ENCODE measurements at regions of chr17 and their contacts with region 1.

Region 1: DNA sequence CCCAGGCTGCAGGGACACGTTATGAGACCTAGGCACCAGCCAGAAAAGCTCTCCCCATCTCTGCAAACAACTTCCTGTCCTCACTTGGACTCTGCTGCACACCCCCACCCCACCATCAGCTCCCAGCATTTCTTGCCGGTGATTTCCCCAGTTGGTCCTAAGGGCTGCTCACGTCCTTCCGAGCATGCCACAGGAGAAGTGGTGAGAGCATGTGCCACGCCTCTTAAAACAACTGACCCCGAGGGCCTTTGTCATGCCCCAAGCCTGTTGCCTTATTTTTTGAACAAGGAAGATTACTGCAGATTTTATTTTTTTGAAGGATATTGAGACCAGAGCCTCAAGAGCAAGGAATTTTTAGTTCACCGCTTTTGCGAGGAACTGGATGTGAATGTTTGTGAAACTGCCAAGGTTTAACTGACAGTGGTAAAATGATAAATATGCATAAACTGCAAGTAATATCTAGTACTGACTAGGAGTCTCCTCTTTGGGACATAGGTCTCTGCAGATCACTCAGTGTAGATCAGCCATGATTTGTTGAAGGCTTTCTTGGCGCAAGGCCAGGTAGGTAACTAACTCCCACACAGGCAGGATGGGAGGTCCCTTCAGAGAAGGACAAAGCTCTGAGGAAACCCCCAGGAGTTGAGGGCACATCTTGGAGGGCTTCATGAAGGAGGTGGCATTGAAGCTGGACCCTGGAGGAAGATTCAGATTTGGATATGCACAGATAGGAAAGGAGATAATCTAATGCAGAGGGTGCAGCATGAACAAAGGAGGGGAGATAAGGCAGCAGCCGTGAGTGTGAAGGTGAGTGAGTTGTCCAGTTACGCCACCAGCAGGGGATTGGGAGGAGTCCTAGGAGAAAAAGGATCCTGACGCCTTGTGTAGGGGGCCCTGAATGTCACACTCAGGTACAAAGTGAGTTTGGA is 44.7 kb downstream of the TMEM132E start:
- DNase-seq: no peak
- H3K4me3 ChIP-seq: no peak overlapping the region
- H3K27ac ChIP-seq: no peak overlapping the region
- H3K4me1 ChIP-seq: peaks cover 12% of the 10 kb centered on the region
- H3K27me3 ChIP-seq: peaks cover 7% of the 10 kb centered on the region
- CTCF ChIP-seq: no peak

Region 2: DNA sequence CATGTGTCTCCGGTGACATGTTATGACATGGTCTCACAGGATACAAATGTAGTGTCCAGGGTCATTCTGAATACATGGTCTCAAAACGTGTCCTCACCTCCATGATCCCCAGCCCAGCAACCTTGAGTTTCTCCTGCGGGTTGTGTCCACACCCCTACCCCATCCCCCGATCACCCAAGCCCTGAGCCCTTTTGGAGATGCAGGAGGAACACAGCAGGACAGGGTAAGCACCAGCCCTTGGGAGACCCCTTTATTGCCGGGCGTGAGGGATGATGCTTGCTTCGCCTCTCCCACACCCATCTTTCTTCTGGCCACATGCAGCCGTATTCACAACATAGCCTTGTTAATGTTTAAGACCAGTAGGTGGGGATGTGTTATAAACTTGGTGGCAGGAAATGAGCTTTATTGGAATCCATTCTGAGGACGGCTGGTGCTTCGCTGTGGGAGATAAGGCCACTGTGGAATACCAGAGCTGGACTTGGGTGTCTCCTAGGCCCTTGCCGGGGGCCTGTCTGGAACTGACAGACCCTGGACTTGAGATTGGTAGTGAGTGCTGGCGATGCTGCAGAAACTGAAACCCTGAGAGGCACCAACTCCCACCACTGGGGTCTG is 39.2 kb before region 1 on chr17:
- CTCF ChIA-PET with region 1: no interaction called
- dilution Hi-C with region 1: no loop called
- in situ Hi-C with region 1: no loop called
- intact Hi-C with region 1: loop called (anchors 5 kb)
- DNase-seq: peak; percentile 15
- H3K4me3 ChIP-seq: no peak overlapping the region
- H3K27ac ChIP-seq: no peak overlapping the region
- H3K4me1 ChIP-seq: no peaks in the 10 kb centered on the region
- H3K27me3 ChIP-seq: peaks cover 30% of the 10 kb centered on the region
- CTCF ChIP-seq: peak; percentile 6 to 45